Mammary epithelial cell (primary cell): ENCODE measurements at regions of chr5 and their contacts with region 1.

Region 1: DNA sequence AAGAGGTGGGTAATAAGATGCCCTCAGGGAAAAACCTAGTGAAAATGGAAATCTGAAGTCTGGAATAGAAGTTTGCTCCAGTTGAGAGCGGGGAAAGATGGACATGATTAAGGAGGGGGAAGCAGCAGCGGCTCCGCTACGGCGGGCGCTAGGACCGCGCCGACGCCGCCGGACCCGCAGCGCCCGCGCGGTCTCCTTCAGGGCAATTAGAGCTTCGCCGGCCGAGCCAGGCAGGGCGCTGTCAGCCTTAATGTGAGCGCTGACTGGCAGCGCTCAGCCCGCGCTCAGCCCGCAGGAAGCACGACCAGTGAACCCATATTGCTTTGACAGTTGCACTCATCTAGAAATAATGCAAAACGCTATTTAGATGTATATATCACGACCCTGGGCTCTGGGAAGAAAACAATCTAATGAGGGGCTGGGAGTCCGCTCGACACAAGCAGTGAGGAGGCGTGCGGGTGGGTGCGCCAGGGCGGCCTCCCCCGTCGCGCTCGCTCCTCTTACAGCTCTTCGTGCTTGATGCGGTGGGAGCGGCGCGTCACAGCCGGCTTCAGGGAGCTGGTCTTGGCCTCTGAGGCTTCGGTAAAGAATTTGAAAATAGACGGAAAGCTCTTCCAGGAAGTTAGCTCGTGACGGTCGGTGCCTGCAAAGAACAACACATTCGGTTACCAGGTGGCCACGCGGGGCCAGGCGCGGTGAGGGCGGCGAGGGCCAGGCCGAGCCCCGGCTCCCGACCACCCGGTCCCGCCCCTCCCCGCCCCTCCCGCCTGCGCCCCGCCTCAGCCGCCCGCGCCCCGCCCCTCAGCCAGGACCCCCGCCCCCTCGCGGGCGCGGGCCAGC is 37.7 kb downstream of the NR2F1 start:
- DNase-seq: peak; percentile 67
- H3K4me3 ChIP-seq: peak overlapping the region; percentile 62 to 73 (median 71)
- H3K27ac ChIP-seq: no peak overlapping the region
- H3K4me1 ChIP-seq: peaks cover 10% of the 10 kb centered on the region
- H3K27me3 ChIP-seq: no peaks in the 10 kb centered on the region
- CTCF ChIP-seq: peak in 1 of 2 donors; percentile 33

Region 2: DNA sequence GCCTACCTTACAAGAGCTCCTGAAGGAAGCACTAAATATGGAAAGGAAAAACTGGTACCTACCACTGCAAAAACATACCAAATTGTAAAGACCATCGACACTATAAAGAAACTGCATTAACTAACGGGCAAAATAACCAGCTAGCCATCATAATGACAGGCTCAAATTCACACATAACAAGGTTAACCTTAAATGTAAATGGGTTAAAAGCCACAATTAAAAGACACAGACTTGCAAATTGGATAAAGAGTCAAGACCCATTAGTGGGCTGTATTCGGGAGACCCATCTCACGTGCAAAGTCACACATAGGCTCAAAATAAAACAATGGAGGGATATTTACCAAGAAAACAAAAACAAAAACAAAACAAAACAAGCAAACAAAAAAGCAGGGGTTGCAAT is 71.3 kb after region 1 on chr5:
- CTCF ChIA-PET with region 1: no interaction called
- dilution Hi-C with region 1: loop called (anchors 10 kb)
- in situ Hi-C with region 1: no loop called
- intact Hi-C with region 1: no loop called
- DNase-seq: no peak
- H3K4me3 ChIP-seq: no peak overlapping the region
- H3K27ac ChIP-seq: no peak overlapping the region
- H3K4me1 ChIP-seq: no peaks in the 10 kb centered on the region
- H3K27me3 ChIP-seq: no peaks in the 10 kb centered on the region
- CTCF ChIP-seq: no peak